B cell (primary cell): ENCODE measurements at regions of chr4 and their contacts with region 1.

Region 1: DNA sequence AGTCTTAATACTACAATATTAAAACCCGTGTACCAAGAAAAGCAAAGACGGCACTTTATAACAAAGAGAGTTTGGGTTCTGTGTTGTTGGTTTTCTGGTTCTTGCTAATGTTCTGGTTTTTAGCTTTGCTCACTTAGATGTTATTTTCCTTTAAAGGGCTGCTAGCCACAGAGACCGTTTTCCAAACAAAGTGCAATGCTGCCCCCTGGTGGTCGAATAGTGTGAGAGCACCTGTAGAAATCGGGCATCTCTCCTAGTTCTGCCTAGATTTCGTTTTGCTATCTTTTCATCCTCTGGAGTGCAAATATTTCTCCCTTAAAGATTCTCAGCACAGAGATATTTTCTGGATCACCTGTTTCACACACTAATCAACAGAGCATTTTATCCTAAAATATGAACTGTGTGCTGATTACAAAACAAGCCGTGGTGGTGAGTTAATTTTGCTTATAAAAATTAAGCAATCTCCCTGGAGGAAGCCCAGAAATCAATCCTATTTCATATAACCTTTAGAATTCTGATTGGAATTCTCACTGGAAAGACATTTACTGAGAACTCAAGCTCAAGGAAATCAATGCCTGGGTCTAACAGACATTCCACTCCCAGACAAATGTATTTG is 334.5 kb upstream of the NOCT start:
- DNase-seq: peak; percentile 68
- ATAC-seq: peak; percentile 58
- H3K4me3 ChIP-seq: no peak overlapping the region
- H3K4me3 Mint-ChIP-seq: no peak overlapping the region
- H3K27ac ChIP-seq: no peak overlapping the region
- H3K27ac Mint-ChIP-seq: no peak overlapping the region
- H3K4me1 ChIP-seq: no peaks in the 10 kb centered on the region
- H3K4me1 Mint-ChIP-seq: no peaks in the 10 kb centered on the region
- H3K27me3 ChIP-seq: peaks cover 0 to 6% (median 2%) of the 10 kb centered on the region in 4 experiments
- H3K27me3 Mint-ChIP-seq: peaks cover 12% of the 10 kb centered on the region
- CTCF ChIP-seq: peak; percentile 97

Region 2: DNA sequence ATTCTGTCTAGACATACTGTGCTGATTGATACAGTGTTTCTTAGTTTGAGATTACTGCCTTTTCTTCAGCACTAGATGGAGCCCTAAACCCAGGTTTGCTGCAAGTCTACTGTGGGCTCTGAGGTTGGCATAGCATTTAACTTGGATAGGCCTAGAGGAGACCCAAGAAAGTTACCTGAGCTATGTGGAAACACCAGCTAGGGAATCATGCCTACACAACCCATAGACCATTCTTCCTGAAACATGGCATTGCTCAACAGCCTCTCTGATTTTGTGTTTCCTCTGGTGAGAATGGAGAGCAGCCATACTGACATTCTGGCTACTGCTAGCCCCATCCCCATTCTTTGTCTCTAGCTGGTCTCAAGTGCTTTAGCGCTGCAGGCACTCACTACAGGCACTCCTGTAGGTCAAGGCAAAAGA is 861.1 kb before region 1 on chr4:
- CTCF ChIA-PET with region 1: interaction called, 12 read pairs
- POLR2A ChIA-PET with region 1: no interaction called
- intact Hi-C with region 1: no loop called
- DNase-seq: peak; percentile 5
- ATAC-seq: no peak
- H3K4me3 ChIP-seq: no peak overlapping the region
- H3K4me3 Mint-ChIP-seq: no peak overlapping the region
- H3K27ac ChIP-seq: no peak overlapping the region
- H3K27ac Mint-ChIP-seq: no peak overlapping the region
- H3K4me1 ChIP-seq: no peaks in the 10 kb centered on the region
- H3K4me1 Mint-ChIP-seq: no peaks in the 10 kb centered on the region
- H3K27me3 ChIP-seq: no peaks in the 10 kb centered on the region
- H3K27me3 Mint-ChIP-seq: peaks cover 3% of the 10 kb centered on the region
- CTCF ChIP-seq: peak; percentile 19

Region 3: DNA sequence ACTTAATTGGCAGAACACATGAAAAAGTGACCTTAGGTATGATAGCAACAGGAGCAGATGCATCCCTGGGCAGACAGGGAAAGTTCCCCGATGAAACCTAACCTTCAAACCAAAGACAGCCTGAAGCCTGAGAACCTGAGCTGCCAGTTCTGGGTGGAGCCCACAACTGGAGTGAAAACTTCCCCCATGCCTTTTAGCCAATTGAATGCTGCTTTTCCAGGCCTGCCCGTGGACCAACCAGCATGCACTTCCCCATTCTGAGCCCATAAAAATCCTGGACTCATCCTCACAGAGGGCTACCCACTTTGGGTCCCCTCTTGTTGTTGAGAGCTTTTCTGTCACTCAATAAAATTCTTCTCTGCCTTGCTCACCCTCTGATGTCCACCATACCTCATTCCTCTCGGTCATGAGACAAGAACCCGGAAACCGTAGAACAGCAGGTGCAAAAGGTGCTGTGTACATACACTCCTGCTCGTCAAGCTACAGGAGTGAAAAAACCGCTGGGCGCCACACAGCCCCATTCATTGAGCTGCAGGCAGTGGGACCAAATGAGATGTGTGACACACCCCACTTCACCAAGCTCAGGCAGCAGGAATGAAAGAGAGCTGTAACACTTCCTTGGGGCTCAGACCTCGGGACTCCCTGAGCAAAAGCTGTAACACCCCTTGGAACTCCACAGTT is 425.0 kb before region 1 on chr4:
- CTCF ChIA-PET with region 1: no interaction called
- POLR2A ChIA-PET with region 1: no interaction called
- intact Hi-C with region 1: no loop called
- DNase-seq: no peak
- ATAC-seq: no peak
- H3K4me3 ChIP-seq: no peak overlapping the region
- H3K4me3 Mint-ChIP-seq: no peak overlapping the region
- H3K27ac ChIP-seq: no peak overlapping the region
- H3K27ac Mint-ChIP-seq: no peak overlapping the region
- H3K4me1 ChIP-seq: no peaks in the 10 kb centered on the region
- H3K4me1 Mint-ChIP-seq: peaks cover 3% of the 10 kb centered on the region
- H3K27me3 ChIP-seq: no peaks in the 10 kb centered on the region
- H3K27me3 Mint-ChIP-seq: peaks cover 3% of the 10 kb centered on the region
- CTCF ChIP-seq: no peak

Region 4: DNA sequence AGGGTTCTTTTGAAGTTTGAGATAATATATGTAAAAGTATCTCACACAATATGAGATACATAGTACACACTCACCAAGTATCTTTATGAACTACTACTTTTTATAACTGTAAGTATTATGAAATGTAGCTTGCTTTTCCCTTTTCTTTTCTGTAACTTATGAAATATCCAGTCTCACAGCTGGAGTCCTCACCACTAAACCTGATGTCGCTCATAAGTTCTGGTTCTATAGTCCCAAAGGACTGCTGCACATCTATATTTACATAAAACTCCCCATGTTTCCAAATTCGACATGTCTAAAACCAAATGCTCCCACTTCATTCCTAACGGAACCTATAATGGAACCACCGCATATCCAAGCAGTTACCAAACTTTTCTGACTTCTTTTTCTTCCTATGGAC is 252.5 kb before region 1 on chr4:
- CTCF ChIA-PET with region 1: no interaction called
- POLR2A ChIA-PET with region 1: no interaction called
- intact Hi-C with region 1: no loop called
- DNase-seq: no peak
- ATAC-seq: no peak
- H3K4me3 ChIP-seq: no peak overlapping the region
- H3K4me3 Mint-ChIP-seq: no peak overlapping the region
- H3K27ac ChIP-seq: no peak overlapping the region
- H3K27ac Mint-ChIP-seq: no peak overlapping the region
- H3K4me1 ChIP-seq: no peaks in the 10 kb centered on the region
- H3K4me1 Mint-ChIP-seq: no peaks in the 10 kb centered on the region
- H3K27me3 ChIP-seq: no peaks in the 10 kb centered on the region
- H3K27me3 Mint-ChIP-seq: no peaks in the 10 kb centered on the region
- CTCF ChIP-seq: no peak

Region 5: DNA sequence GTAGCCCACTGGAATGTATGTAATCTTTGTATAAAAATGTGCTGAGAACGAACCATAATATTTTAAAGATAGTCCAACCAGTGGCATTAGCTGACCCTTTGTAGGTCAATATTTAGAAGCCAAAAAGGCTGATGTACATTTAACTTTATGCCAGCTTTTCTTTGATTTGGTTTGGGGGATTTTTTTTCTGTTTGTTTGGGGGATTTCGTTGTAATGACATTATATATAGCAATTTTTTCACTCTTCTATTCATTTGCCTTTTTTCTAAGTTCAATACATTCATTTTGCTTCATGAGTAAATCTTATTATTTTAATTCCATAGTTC is 47.6 kb before region 1 on chr4:
- CTCF ChIA-PET with region 1: no interaction called
- POLR2A ChIA-PET with region 1: no interaction called
- intact Hi-C with region 1: no loop called
- DNase-seq: no peak
- ATAC-seq: no peak
- H3K4me3 ChIP-seq: no peak overlapping the region
- H3K4me3 Mint-ChIP-seq: no peak overlapping the region
- H3K27ac ChIP-seq: no peak overlapping the region
- H3K27ac Mint-ChIP-seq: no peak overlapping the region
- H3K4me1 ChIP-seq: no peaks in the 10 kb centered on the region
- H3K4me1 Mint-ChIP-seq: no peaks in the 10 kb centered on the region
- H3K27me3 ChIP-seq: no peaks in the 10 kb centered on the region
- H3K27me3 Mint-ChIP-seq: no peaks in the 10 kb centered on the region
- CTCF ChIP-seq: no peak

Region 6: DNA sequence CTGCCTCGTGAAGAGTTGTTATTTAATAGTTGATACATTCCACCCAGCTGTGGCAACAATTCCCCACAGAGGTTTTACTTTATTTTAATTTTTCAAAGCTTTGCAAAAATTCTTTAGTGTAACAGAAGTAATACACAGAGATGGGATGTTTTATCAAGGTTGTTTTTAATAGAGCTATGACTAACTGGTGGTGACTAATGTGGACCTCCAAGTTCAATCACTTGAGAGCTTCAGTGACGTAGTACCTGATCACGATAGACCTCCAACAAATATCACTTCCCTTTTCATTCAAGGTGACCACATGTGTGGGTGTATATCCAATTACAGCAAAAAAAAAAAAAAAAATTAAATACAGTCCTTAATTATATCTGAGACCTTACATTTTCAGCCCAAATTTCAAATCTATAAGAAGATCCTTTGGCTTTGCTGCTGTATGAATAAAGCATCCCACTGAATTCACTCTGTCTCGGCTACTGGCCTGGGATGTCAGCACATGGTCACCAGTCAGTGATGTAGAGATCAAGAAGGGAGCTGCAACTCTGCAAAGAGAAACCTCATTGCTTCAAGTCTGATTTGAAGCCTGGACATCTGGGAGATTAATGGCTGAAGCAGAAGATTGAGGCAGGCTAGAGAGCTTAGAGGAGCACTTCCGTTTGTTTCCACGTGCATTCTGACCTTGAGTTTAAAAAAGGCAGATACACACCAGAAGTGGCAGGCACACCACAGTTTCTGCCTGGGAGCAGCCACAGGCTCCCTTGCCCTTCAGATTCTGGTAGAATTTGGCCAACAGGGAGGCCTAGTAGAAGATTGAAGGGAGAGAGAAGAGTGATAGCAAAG is 11.4 kb before region 1 on chr4:
- CTCF ChIA-PET with region 1: interaction called, 14 read pairs
- POLR2A ChIA-PET with region 1: no interaction called
- intact Hi-C with region 1: no loop called
- DNase-seq: no peak
- ATAC-seq: no peak
- H3K4me3 ChIP-seq: no peak overlapping the region
- H3K4me3 Mint-ChIP-seq: no peak overlapping the region
- H3K27ac ChIP-seq: no peak overlapping the region
- H3K27ac Mint-ChIP-seq: no peak overlapping the region
- H3K4me1 ChIP-seq: no peaks in the 10 kb centered on the region
- H3K4me1 Mint-ChIP-seq: no peaks in the 10 kb centered on the region
- H3K27me3 ChIP-seq: no peaks in the 10 kb centered on the region
- H3K27me3 Mint-ChIP-seq: peaks cover 4% of the 10 kb centered on the region
- CTCF ChIP-seq: no peak

Region 7: DNA sequence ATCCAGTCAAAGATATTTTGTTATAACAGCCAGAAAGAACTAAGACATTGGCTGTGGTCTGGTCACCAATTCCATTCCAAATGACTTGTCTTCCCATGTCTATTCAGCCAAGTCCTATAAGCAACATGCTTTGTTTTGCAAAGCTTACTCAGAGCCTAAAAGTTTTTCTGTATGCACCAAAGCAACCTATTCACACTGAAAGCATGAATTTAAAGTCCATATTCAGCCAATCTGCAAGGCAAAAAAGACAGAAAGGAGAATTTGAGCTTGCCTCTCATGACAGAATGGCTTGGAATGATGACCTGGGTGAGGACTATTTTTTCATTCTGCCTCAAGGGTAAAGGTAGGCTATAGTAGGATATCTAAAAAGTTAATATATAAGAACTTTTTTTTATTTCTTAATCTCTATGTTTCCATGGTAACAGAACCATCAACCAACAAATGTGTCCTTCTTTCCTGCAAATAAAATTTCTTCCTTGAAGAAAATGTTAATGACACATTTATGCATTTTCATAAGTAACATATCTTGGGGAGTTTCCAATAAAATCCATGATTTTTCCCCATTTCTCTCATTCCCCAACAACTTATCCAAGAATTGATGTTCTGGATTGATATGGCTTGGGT is 11.4 kb after region 1 on chr4:
- CTCF ChIA-PET with region 1: interaction called, 25 read pairs
- POLR2A ChIA-PET with region 1: no interaction called
- intact Hi-C with region 1: no loop called
- DNase-seq: no peak
- ATAC-seq: no peak
- H3K4me3 ChIP-seq: no peak overlapping the region
- H3K4me3 Mint-ChIP-seq: no peak overlapping the region
- H3K27ac ChIP-seq: no peak overlapping the region
- H3K27ac Mint-ChIP-seq: no peak overlapping the region
- H3K4me1 ChIP-seq: no peaks in the 10 kb centered on the region
- H3K4me1 Mint-ChIP-seq: no peaks in the 10 kb centered on the region
- H3K27me3 ChIP-seq: peaks cover 0 to 3% (median 0%) of the 10 kb centered on the region in 4 experiments
- H3K27me3 Mint-ChIP-seq: peaks cover 12% of the 10 kb centered on the region
- CTCF ChIP-seq: no peak